RWPE1 (cell line): ENCODE measurements at regions of chr9 and their contacts with region 1.

Region 1: DNA sequence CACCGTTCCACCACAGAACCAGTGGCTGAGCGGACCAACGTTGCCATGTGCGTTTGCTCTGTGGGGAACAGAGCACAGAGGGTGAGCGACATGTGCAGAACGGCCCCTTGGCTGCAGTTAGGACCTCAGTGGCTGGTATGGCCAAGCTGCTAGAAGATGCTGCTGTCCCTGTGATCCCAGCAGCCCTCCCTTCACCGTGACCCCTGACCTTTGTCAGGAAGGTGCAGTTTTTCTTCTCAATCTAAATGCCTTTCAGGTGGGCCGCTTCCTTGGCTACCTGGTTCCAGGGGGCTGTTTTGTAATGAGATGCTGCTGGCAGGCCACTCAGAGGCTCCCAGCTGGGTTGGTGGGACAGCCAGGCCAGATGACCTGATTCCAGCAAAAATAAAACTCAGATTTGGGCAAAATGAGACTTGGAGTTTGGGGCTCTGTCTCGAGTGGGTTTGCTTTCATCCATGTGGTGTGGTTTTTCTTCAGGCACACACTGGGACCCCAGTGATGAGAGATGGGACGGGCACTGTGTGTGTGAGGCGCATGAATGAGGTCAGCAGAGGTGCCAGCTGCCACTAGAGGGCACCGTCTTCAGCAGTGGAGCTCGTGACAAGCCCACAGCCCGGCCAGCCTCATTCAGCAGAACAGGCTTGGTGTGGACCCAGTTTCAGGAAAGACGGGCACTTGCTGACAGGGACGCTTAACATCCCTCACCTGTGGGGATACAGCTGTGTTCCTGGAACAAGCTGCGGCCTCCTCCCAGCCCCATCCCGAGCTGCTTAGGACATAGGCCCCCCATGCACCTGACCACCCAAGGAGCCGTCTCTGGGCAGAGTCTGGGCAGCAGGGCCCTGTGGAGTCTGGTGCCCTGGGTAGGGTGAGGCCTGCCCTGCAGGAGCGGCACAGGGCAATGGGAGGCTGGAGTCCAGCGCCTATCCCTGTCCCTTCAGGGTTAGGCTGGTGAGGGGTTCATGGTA is 4.1 kb downstream of the MRPS2 start:
- DNase-seq: peak; percentile 64
- H3K27ac ChIP-seq: peak overlapping the region; percentile 1; the same call in 1 of the 2 replicates
- CTCF ChIP-seq: peak; percentile 98

Region 2: DNA sequence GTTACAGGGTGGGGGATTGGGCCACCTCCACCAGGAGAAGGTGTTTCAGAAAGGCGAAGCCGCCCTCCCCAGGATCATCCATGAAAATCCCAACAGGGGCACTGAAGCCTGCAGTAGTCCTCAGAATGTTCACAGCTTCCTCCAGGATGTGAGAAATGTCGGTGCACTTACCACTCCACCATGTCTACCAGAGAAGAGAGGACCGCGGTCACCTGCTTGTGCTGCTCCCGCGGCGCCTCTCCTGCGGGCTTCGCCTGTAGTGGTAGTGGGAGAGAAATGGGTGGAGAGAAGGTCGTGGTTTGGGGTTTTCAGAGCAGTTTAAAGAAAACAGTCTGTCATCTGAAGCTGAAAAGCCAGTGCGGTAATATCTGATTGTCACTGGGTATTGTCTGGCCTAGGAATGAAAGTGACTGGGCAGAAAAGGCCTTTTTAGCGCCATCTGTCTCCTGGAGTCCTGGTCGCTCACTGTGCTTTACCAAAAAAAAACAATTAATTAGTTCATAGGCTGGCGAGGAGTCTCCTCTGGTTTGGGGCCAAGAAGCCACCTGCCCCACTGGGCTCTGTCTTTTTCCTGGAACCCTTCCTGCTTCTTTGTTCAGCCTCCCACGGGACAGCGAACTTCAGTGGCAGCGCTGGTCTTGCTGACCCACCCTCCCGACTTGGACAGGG is 48.0 kb before region 1 on chr9:
- CTCF ChIA-PET with region 1: no interaction called
- POLR2A ChIA-PET with region 1: no interaction called
- DNase-seq: no peak
- H3K27ac ChIP-seq: no peak overlapping the region
- CTCF ChIP-seq: no peak

Region 3: DNA sequence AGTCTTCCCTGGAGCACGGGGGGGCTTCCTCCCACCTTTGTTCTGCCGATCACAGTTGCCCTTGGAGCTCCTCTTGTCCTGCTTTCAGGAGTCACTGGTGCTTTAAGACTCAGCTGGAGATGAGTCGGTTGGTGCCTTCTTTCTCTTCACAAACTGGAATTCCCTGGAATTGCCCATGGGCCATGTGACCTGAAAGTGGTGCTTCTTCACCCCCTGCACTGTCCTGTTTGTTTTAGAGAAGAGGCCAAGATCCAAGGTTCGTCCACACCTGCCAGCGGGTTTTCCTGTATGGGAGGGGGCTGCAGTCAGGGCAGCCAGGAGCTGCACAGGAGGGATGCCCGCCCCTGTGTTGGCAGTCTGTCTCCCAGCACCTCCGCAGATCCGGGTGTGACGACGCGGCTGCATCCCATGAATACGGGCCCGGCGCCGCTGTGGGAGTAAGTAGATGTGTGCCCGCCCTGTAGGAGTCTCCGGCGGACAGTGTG is 13.5 kb before region 1 on chr9:
- CTCF ChIA-PET with region 1: interaction called, 13 read pairs
- POLR2A ChIA-PET with region 1: no interaction called
- DNase-seq: no peak
- H3K27ac ChIP-seq: no peak overlapping the region
- CTCF ChIP-seq: no peak

Region 4: GRCh38 chr9:135515083-135515951 is 10.8 kb after region 1 on chr9:
- CTCF ChIA-PET with region 1: interaction called, 11 read pairs
- POLR2A ChIA-PET with region 1: no interaction called
- DNase-seq: no peak
- H3K27ac ChIP-seq: no peak overlapping the region
- CTCF ChIP-seq: no peak

Region 5: GRCh38 chr9:135533113-135533512 is 28.6 kb after region 1 on chr9:
- CTCF ChIA-PET with region 1: interaction called, 12 read pairs
- POLR2A ChIA-PET with region 1: no interaction called
- DNase-seq: no peak
- H3K27ac ChIP-seq: no peak overlapping the region
- CTCF ChIP-seq: no peak